ENCODE measurements at regions of chr10 and their contacts with region 1.

Region 1: DNA sequence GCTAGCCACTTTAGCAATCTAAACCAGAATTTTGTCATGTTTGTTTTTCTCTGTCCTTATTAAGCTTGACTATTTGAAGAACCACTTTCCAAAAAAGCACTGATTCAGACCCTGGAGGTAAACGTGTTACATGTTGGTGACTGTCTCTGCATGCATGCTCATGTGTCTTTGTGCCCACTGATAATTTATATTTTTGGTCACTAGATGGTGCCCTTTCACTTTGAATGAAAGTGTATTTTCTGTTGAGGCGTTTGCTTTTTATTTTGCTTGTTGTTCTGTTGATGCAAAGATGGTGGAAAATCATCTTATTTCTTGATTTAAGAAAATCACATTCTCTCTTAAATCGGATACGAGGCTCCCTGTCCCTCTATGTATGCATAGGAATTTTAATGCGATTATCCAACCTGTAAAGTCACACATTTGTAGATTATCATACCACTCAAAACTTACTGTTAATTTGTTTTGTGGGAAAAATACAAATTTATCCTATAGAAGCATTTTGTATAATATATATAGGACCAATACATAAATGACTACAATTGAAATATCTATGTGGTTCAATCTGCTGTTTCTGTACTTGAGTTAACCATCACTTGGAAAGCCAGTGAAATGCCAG is 269.3 kb downstream of the BICC1 start:
- DNase-seq: peak in 1 of 2 donors; percentile 30
- ATAC-seq: no peak
- H3K4me3 ChIP-seq: no peak overlapping the region
- H3K4me3 Mint-ChIP-seq: no peak overlapping the region
- H3K27ac ChIP-seq: no peak overlapping the region
- H3K27ac Mint-ChIP-seq: no peak overlapping the region
- H3K4me1 ChIP-seq: no peaks in the 10 kb centered on the region
- H3K4me1 Mint-ChIP-seq: no peaks in the 10 kb centered on the region
- H3K27me3 ChIP-seq: no peaks in the 10 kb centered on the region
- H3K27me3 Mint-ChIP-seq: no peaks in the 10 kb centered on the region
- CTCF ChIP-seq: no peak

Region 2: DNA sequence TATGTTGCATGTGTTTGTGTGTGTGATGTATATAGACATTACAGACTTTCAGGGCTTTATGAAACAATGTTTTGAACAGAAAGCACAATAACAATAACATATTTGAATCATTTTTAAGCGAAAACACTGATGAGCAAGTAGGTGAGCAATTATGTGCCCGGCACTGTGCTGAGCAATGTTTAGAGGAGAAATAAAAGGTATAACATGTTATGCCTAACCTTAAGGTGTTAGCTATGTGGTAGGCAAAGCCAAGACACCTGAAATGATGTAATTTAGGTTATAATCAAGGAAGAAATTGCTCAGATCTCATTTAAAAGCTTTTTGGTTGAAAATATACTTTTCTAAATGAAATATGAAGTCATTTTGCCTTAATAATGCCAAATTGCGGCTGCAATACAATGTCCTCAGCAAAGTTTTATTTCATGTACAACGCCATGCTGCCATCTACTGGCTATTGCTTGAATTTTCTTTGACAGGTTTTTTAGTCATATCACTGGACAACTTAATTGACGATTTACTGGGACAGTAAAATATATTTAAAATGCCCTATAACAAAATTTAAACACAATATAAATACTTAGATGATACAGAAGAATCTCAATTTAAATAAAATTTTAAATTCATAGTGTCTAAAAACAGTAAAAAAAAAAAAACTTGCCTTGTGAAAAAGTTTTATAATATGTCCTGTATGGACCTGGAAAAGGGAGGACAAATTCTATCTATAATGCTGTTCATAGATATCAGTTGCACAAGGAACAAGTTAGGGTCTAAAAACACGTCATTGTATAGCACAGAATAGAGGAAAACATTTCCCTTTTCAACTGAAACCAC is 1865.2 kb after region 1 on chr10:
- intact Hi-C with region 1: loop called (anchors 5 kb)
- DNase-seq: peak in 1 of 2 donors; percentile 77
- ATAC-seq: peak in 2 of 3 donors; percentile 53 to 67
- H3K4me3 ChIP-seq: no peak overlapping the region
- H3K4me3 Mint-ChIP-seq: no peak overlapping the region
- H3K27ac ChIP-seq: no peak overlapping the region
- H3K27ac Mint-ChIP-seq: no peak overlapping the region
- H3K4me1 ChIP-seq: no peaks in the 10 kb centered on the region
- H3K4me1 Mint-ChIP-seq: no peaks in the 10 kb centered on the region
- H3K27me3 ChIP-seq: no peaks in the 10 kb centered on the region
- H3K27me3 Mint-ChIP-seq: no peaks in the 10 kb centered on the region
- CTCF ChIP-seq: peak; percentile 87

Measured in natural killer cell (primary cell).